ENCODE measurements at regions of chr16 and their contacts with region 1.

Region 1: GRCh38 chr16:51941412-51941811 is 605.5 kb downstream of the TOX3 start:
- DNase-seq: no peak
- H3K4me3 ChIP-seq: no peak overlapping the region
- H3K27ac ChIP-seq: no peak overlapping the region
- H3K4me1 ChIP-seq: peaks cover 0 to 7% (median 0%) of the 10 kb centered on the region in 4 experiments; a peak in 1 of 7 replicates
- H3K27me3 ChIP-seq: no peaks in the 10 kb centered on the region
- CTCF ChIP-seq: peak; percentile 25 to 60 (median 32)
- EP300 ChIP-seq: no peak
- POLR2A ChIP-seq: no peak
- RAD21 ChIP-seq: peak in 1 of 2 experiments; percentile 28; a peak in 1 of 4 replicates

Region 2: GRCh38 chr16:51951668-51952298 is 10.4 kb after region 1 on chr16:
- CTCF ChIA-PET with region 1: interaction called, 17 read pairs
- POLR2A ChIA-PET with region 1: no interaction called
- DNase-seq: peak; percentile 27 to 57
- H3K4me3 ChIP-seq: peak overlapping the region in 1 of 4 experiments; percentile 24; a peak in 2 of 8 replicates
- H3K27ac ChIP-seq: no peak overlapping the region
- H3K4me1 ChIP-seq: peaks cover 7 to 25% (median 16%) of the 10 kb centered on the region in 4 experiments; a peak in 6 of 7 replicates
- H3K27me3 ChIP-seq: no peaks in the 10 kb centered on the region
- CTCF ChIP-seq: no peak
- EP300 ChIP-seq: no peak
- POLR2A ChIP-seq: no peak
- RAD21 ChIP-seq: no peak